ENCODE measurements at regions of chr15 and their contacts with region 1.

Region 1: GRCh38 chr15:32786906-32787305 is 69.1 kb downstream of the GREM1 start:
- DNase-seq: no peak
- H3K4me3 ChIP-seq: no peak overlapping the region
- H3K27ac ChIP-seq: no peak overlapping the region
- H3K27me3 ChIP-seq: no peaks in the 10 kb centered on the region
- CTCF ChIP-seq: no peak

Region 2: DNA sequence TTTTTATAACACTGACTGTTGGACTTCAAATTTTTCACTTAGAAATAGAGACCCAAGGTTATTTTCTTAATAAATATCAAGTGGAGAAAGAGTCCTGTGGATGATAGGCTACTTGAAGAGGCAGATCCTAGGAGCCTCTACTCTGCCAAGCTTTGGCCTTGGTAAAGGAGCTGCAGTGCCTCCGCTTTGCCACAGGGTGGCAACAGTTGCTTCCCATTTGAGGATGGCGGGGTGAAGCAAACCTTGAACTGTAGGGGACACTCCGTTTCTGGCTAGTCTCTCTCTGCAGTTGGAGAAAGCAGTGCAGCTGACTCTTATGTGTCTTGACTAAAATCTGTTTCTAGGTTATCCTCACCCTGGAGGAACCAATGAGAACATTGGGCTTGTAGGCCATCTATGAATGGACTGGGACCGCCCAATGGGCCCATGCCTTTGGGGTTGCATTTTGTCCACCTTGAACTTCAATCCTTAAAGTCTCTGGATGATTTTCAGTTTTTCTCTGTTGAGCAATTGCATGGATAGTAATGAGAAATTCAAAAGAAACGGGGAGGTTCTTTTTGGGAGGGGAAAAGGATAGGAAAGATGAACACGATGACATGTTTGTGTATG is 135.6 kb before region 1 on chr15:
- intact Hi-C with region 1: no loop called
- DNase-seq: peak in 6 of 10 donors; percentile 35 to 68 (median 46)
- H3K4me3 ChIP-seq: no peak overlapping the region
- H3K27ac ChIP-seq: no peak overlapping the region
- H3K27me3 ChIP-seq: no peaks in the 10 kb centered on the region
- CTCF ChIP-seq: peak; percentile 53 to 94 (median 83)

Region 3: GRCh38 chr15:32824777-32825176 is 37.9 kb after region 1 on chr15:
- intact Hi-C with region 1: loop called in 1 of 2 experiments (anchors 5 kb)
- DNase-seq: no peak
- H3K4me3 ChIP-seq: no peak overlapping the region
- H3K27ac ChIP-seq: no peak overlapping the region
- H3K27me3 ChIP-seq: no peaks in the 10 kb centered on the region
- CTCF ChIP-seq: no peak

Region 4: GRCh38 chr15:32884146-32884545 is 97.2 kb after region 1 on chr15:
- intact Hi-C with region 1: no loop called
- DNase-seq: no peak
- H3K4me3 ChIP-seq: no peak overlapping the region
- H3K27ac ChIP-seq: peak overlapping the region in 3 of 59 donors; percentile 19 to 39 (median 21)
- H3K27me3 ChIP-seq: no peaks in the 10 kb centered on the region
- CTCF ChIP-seq: no peak

Measured in dorsolateral prefrontal cortex (tissue), 120 donors.